Activated CD8-positive, alpha-beta T cell treated with anti-CD3 and anti-CD28 coated beads for 36 hours (primary cell): ENCODE measurements at regions of chr10 and their contacts with region 1.

Region 1: DNA sequence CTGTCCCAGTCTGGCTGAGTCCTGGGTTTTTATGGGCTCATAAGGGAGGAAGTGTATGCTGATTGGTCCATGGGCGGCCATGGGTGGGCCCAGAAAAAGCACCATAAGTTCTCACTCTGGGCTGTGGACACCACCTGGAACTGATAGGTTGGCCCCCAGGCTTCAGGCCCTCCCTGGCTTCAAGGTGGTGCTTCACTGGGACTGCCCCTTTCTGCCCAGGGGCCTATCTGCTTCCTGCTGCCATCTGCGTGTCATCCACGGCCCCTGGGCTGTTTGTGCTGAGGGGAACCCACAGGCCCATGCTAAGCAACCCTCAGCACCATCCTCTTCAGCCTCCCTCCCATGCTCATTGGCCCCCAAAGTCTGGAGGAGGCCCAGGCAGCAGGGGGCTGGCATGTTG is 13.1 kb upstream of the LIPA start:
- DNase-seq: no peak
- ATAC-seq: no peak
- H3K4me3 Mint-ChIP-seq: no peak overlapping the region
- H3K27ac Mint-ChIP-seq: no peak overlapping the region
- H3K4me1 Mint-ChIP-seq: peaks cover 6% of the 10 kb centered on the region
- H3K27me3 Mint-ChIP-seq: peaks cover 1% of the 10 kb centered on the region
- CTCF ChIP-seq: no peak

Region 2: GRCh38 chr10:89555701-89556445 is 291.2 kb after region 1 on chr10:
- CTCF ChIA-PET with region 1: no interaction called
- POLR2A ChIA-PET with region 1: no interaction called
- intact Hi-C with region 1: loop called (anchors 2 kb)
- DNase-seq: no peak
- ATAC-seq: no peak
- H3K4me3 Mint-ChIP-seq: no peak overlapping the region
- H3K27ac Mint-ChIP-seq: no peak overlapping the region
- H3K4me1 Mint-ChIP-seq: no peaks in the 10 kb centered on the region
- H3K27me3 Mint-ChIP-seq: peaks cover 5% of the 10 kb centered on the region
- CTCF ChIP-seq: no peak